ENCODE measurements at regions of chr7 and their contacts with region 1.

Region 1: DNA sequence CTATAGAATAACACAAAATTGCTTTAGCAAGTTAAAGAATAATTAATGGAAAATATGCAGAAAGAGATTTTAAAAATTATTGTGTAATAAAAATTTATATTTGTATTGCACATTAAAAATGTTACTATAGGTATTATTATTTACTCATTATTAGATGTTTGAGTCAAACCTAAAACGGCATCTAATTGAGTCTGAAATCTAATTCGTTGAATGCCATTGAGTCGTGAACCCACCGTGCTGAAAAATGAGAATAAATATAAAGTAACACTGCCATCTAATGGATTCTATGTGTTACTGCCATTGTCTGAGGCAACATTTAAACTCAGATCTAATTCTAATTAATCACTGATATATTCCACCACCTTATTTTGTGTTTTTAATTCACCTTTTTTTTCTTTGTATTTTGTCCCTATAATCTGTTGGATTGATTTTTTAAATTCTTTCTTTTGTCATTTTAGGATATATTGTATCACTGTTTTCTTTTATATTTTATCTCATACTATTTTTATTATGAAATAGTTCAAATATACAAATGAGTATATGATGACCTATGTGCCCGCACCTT is 62.2 kb downstream of the SAMD9 start:
- DNase-seq: peak; percentile 53
- H3K4me3 ChIP-seq: no peak overlapping the region
- H3K27ac ChIP-seq: no peak overlapping the region
- H3K4me1 ChIP-seq: no peaks in the 10 kb centered on the region
- H3K27me3 ChIP-seq: peaks cover 0 to 3% of the 10 kb centered on the region in 2 experiments
- CTCF ChIP-seq: peak; percentile 33 to 48
- POLR2A ChIP-seq: no peak

Region 2: DNA sequence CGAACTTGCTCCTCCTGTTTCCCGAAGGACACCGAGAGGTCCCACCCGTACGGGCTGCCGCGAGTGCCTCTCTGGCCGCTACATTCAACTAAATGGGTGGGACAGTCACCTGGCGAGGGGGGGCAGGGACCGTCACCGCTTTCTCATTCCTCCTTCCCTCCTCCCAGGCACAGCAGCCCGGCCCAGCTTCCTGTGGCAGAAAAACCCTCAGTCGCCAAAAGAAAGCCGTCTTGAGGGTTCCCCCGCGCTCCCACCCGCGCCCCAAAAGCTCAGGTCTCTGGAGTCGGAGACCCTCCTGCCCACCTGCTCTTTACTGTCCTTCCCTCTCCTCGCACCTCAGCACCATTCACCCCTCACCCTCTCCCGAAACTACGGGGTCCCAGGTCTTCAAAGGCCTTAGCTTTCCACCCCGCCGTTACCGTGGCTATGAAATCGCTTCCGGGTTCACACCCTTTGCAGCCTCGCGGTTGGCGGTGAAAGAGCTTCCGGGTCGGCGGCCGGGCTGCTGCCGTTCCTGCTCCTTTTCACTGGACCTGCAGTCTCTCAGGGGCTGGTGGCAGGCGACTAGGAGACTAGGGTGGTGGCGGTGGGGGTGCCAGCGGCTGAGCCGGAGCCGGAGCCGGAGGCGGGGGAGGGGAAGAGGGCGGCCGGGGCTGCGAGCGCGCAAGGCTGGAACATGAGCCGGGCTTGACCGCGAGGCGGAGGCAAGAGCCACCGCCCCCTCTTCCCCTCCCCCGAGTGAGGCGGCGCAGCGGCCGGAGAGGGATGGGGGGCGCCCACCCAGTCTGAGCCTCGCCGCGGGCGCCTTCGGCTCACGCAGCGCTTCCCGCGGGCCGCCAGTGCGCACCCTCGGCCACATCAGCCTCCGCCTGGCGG is 809.9 kb before region 1 on chr7 and contains the starts of genes ANKIB1 and KRIT1:
- CTCF ChIA-PET with region 1: no interaction called
- POLR2A ChIA-PET with region 1: no interaction called
- dilution Hi-C with region 1: no loop called
- intact Hi-C with region 1: loop called (anchors 5 kb)
- DNase-seq: peak; percentile 91
- H3K4me3 ChIP-seq: peak within 1 kb of the TSS; percentile 99
- H3K27ac ChIP-seq: peak within 1 kb of the TSS; percentile 63
- H3K4me1 ChIP-seq: peaks cover 22% of the 10 kb centered on the region
- H3K27me3 ChIP-seq: no peaks in the 10 kb centered on the region
- CTCF ChIP-seq: peak in 1 of 2 donors; percentile 26
- POLR2A ChIP-seq: no peak
- total RNA-seq, gene ANKIB1: 48.4 and 56.5 TPM in 2 replicates
- total RNA-seq, gene KRIT1: 32.9 and 43.7 TPM in 2 replicates

Region 3: DNA sequence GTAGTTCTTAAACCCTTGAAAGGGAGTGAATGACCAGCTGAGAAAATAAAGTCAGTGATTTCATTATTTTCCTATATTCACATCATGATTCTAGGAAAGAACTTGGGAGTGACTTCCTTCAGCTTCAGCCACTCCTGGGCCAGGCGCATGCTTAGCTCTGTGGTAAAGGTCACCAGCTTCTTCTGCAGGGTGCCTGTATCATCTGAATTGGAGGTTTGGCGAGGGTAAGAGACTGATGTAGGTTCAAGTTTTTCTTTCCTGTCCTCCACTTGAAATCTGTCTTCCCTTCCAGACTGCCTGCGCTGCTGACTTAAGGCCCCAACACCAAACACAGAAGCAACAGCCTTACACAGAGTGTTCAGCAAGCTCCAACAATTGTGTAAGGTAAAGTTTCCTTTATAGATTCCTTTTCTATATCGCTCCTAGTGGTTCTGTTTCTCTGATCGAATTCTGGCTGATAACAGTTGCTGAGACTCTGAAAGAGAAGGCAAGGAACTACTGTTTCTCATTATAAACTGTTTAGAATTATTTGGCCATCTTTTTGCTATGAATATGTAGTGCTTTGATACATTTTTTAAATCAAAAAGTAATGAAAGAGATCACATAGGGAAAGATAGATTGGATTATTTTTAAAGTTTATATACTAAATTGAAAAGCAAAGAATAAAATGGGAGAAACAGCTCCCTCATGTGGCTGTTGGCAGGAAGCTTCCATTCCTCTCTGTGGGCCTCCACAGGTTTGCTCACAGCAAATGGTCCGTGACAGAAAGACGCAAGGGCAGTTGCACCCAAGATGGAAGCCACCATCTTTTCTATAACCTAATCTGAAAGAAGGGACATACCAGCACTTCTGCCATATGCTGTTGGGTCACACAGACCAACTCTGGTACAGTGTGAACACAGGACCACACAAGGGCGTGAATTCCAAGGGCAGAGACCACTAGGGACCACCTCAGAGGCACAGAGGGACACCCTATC is 594.3 kb before region 1 on chr7:
- CTCF ChIA-PET with region 1: no interaction called
- POLR2A ChIA-PET with region 1: no interaction called
- dilution Hi-C with region 1: no loop called
- intact Hi-C with region 1: loop called (anchors 1 kb)
- DNase-seq: peak; percentile 57
- H3K4me3 ChIP-seq: no peak overlapping the region
- H3K27ac ChIP-seq: no peak overlapping the region
- H3K4me1 ChIP-seq: peaks cover 5% of the 10 kb centered on the region
- H3K27me3 ChIP-seq: no peaks in the 10 kb centered on the region
- CTCF ChIP-seq: peak; percentile 74 to 76
- POLR2A ChIP-seq: no peak

Region 4: GRCh38 chr7:92590711-92591310 is 464.8 kb before region 1 on chr7:
- CTCF ChIA-PET with region 1: no interaction called
- POLR2A ChIA-PET with region 1: no interaction called
- dilution Hi-C with region 1: no loop called
- intact Hi-C with region 1: loop called (anchors 1 kb)
- DNase-seq: no peak
- H3K4me3 ChIP-seq: peak overlapping the region in 2 of 3 experiments; percentile 33 to 95
- H3K27ac ChIP-seq: no peak overlapping the region
- H3K4me1 ChIP-seq: peaks cover 12% of the 10 kb centered on the region
- H3K27me3 ChIP-seq: no peaks in the 10 kb centered on the region
- CTCF ChIP-seq: no peak
- POLR2A ChIP-seq: no peak

Region 5: GRCh38 chr7:92691578-92691977 is 364.0 kb before region 1 on chr7:
- CTCF ChIA-PET with region 1: interaction called, 3 read pairs
- POLR2A ChIA-PET with region 1: no interaction called
- dilution Hi-C with region 1: no loop called
- intact Hi-C with region 1: loop called (anchors 1 kb)
- DNase-seq: peak; percentile 77
- H3K4me3 ChIP-seq: no peak overlapping the region
- H3K27ac ChIP-seq: peak overlapping the region; percentile 19
- H3K4me1 ChIP-seq: peaks cover 18% of the 10 kb centered on the region
- H3K27me3 ChIP-seq: no peaks in the 10 kb centered on the region
- CTCF ChIP-seq: peak; percentile 32 to 34
- POLR2A ChIP-seq: no peak

Region 6: GRCh38 chr7:92880212-92881090 is 175.2 kb before region 1 on chr7:
- CTCF ChIA-PET with region 1: no interaction called
- POLR2A ChIA-PET with region 1: no interaction called
- dilution Hi-C with region 1: no loop called
- intact Hi-C with region 1: loop called (anchors 1 kb)
- DNase-seq: peak; percentile 20
- H3K4me3 ChIP-seq: no peak overlapping the region
- H3K27ac ChIP-seq: no peak overlapping the region
- H3K4me1 ChIP-seq: no peaks in the 10 kb centered on the region
- H3K27me3 ChIP-seq: no peaks in the 10 kb centered on the region
- CTCF ChIP-seq: peak in 1 of 2 donors; percentile 16
- POLR2A ChIP-seq: no peak

Region 7: DNA sequence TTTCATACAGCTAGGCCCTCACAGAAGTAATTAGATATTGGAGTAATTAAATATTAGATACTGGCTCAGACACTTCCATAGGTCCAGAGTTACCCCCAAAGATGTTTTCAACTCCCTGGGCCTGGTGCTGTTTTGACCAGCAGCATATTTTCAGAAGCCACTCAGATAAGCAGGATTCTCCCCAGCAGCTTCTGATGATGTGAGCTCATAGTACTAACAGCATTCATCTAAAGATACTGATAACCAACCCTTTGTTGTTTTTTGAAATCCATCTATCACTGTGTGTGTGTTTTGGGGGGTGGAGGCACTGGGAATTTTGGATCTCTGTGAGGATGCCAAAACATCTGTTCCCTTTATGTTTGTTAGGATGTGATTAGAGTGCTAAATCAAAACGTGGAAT is 229.3 kb after region 1 on chr7:
- CTCF ChIA-PET with region 1: no interaction called
- POLR2A ChIA-PET with region 1: no interaction called
- dilution Hi-C with region 1: no loop called
- intact Hi-C with region 1: no loop called
- DNase-seq: no peak
- H3K4me3 ChIP-seq: no peak overlapping the region
- H3K27ac ChIP-seq: no peak overlapping the region
- H3K4me1 ChIP-seq: peaks cover 5% of the 10 kb centered on the region
- H3K27me3 ChIP-seq: no peaks in the 10 kb centered on the region
- CTCF ChIP-seq: no peak
- POLR2A ChIP-seq: no peak

Measured in endothelial cell of umbilical vein (primary cell).